B cell (primary cell): ENCODE measurements at regions of chr10 and their contacts with region 1.

Region 1: GRCh38 chr10:23314835-23315239 is 29.8 kb downstream of the C10orf67 start:
- DNase-seq: peak; percentile 79
- ATAC-seq: peak; percentile 56
- H3K4me3 ChIP-seq: no peak overlapping the region
- H3K4me3 Mint-ChIP-seq: no peak overlapping the region
- H3K27ac ChIP-seq: no peak overlapping the region
- H3K27ac Mint-ChIP-seq: no peak overlapping the region
- H3K4me1 ChIP-seq: no peaks in the 10 kb centered on the region
- H3K4me1 Mint-ChIP-seq: no peaks in the 10 kb centered on the region
- H3K27me3 ChIP-seq: peaks cover 0 to 3% (median 0%) of the 10 kb centered on the region in 4 experiments
- H3K27me3 Mint-ChIP-seq: peaks cover 10% of the 10 kb centered on the region
- CTCF ChIP-seq: peak; percentile 92

Region 2: DNA sequence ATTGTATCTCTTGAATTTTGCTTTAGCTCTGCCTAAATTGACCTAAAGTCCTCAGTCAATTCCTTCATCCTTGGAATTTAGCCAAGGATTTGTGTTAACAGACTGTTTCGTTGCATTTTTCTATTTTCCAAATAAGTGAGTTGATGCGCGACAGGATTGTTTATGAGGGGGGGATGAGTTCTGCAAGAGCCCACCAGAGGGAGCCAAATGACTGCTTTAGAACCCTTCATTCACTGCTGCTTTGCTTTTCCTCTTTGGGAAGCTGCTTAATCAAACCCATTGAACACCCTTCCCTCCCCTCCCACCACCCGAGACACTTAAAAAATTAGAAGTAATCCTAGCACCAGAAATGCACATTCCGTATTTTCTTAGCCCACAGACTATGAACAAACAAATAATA is 156.5 kb before region 1 on chr10:
- CTCF ChIA-PET with region 1: interaction called, 7 read pairs
- POLR2A ChIA-PET with region 1: no interaction called
- intact Hi-C with region 1: loop called (anchors 1 kb)
- DNase-seq: peak; percentile 59
- ATAC-seq: peak; percentile 61
- H3K4me3 ChIP-seq: no peak overlapping the region
- H3K4me3 Mint-ChIP-seq: no peak overlapping the region
- H3K27ac ChIP-seq: no peak overlapping the region
- H3K27ac Mint-ChIP-seq: no peak overlapping the region
- H3K4me1 ChIP-seq: no peaks in the 10 kb centered on the region
- H3K4me1 Mint-ChIP-seq: peaks cover 8% of the 10 kb centered on the region
- H3K27me3 ChIP-seq: peaks cover 0 to 9% (median 0%) of the 10 kb centered on the region in 4 experiments
- H3K27me3 Mint-ChIP-seq: peaks cover 42% of the 10 kb centered on the region
- CTCF ChIP-seq: peak; percentile 86

Region 3: GRCh38 chr10:23230582-23230981 is 84.3 kb before region 1 on chr10:
- CTCF ChIA-PET with region 1: no interaction called
- POLR2A ChIA-PET with region 1: no interaction called
- intact Hi-C with region 1: no loop called
- DNase-seq: no peak
- ATAC-seq: no peak
- H3K4me3 ChIP-seq: no peak overlapping the region
- H3K4me3 Mint-ChIP-seq: no peak overlapping the region
- H3K27ac ChIP-seq: no peak overlapping the region
- H3K27ac Mint-ChIP-seq: no peak overlapping the region
- H3K4me1 ChIP-seq: no peaks in the 10 kb centered on the region
- H3K4me1 Mint-ChIP-seq: no peaks in the 10 kb centered on the region
- H3K27me3 ChIP-seq: no peaks in the 10 kb centered on the region
- H3K27me3 Mint-ChIP-seq: peaks cover 3% of the 10 kb centered on the region
- CTCF ChIP-seq: no peak

Region 4: DNA sequence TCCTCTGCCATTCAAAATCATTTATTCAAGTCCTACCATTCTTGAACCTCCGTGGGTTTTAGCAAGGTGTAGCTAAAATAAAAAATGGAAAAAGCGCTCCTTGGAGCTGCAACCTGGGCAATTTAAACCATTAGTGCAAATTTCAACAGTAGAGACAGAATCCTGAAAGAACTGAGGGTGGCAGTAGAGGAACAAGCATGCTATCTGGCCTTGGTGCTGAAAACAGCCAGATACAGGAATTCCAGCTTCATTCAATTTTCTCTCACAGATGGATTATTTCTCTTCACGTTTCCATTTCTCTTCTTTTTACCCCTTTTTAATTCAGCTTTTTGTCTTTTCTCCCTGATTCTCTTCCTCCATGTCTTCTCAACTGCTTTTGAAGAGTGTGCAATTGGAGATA is 201.7 kb after region 1 on chr10:
- CTCF ChIA-PET with region 1: interaction called, 450 read pairs
- POLR2A ChIA-PET with region 1: no interaction called
- intact Hi-C with region 1: no loop called
- DNase-seq: no peak
- ATAC-seq: no peak
- H3K4me3 ChIP-seq: no peak overlapping the region
- H3K4me3 Mint-ChIP-seq: no peak overlapping the region
- H3K27ac ChIP-seq: no peak overlapping the region
- H3K27ac Mint-ChIP-seq: no peak overlapping the region
- H3K4me1 ChIP-seq: peaks cover 7% of the 10 kb centered on the region in 2 donors
- H3K4me1 Mint-ChIP-seq: peaks cover 13% of the 10 kb centered on the region
- H3K27me3 ChIP-seq: peaks cover 0 to 18% (median 4%) of the 10 kb centered on the region in 4 experiments
- H3K27me3 Mint-ChIP-seq: peaks cover 15% of the 10 kb centered on the region
- CTCF ChIP-seq: no peak

Region 5: DNA sequence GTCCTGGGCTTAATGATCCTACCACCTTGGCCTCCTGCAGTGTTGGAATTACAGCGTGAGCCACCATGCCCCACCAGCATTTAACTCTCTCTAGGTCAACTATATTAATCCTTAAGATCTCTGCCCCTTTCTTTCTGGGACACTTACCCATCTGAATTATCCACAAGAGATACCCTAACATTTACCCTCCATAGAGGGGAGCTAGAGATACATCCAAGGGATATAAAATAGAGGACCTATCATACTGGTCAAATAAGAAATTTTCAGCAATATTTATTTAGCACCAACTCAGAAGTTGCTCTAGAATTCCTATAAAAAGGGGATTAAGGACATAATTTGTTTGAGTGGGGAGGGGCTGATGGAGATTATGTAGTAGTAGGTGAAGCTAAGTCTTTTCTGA is 220.5 kb after region 1 on chr10:
- CTCF ChIA-PET with region 1: interaction called, 450 read pairs
- POLR2A ChIA-PET with region 1: no interaction called
- intact Hi-C with region 1: loop called (anchors 1 kb)
- DNase-seq: no peak
- ATAC-seq: no peak
- H3K4me3 ChIP-seq: no peak overlapping the region
- H3K4me3 Mint-ChIP-seq: no peak overlapping the region
- H3K27ac ChIP-seq: no peak overlapping the region
- H3K27ac Mint-ChIP-seq: no peak overlapping the region
- H3K4me1 ChIP-seq: peaks cover 5 to 12% of the 10 kb centered on the region in 2 donors
- H3K4me1 Mint-ChIP-seq: peaks cover 11% of the 10 kb centered on the region
- H3K27me3 ChIP-seq: peaks cover 0 to 3% (median 0%) of the 10 kb centered on the region in 4 experiments
- H3K27me3 Mint-ChIP-seq: peaks cover 33% of the 10 kb centered on the region
- CTCF ChIP-seq: no peak

Region 6: DNA sequence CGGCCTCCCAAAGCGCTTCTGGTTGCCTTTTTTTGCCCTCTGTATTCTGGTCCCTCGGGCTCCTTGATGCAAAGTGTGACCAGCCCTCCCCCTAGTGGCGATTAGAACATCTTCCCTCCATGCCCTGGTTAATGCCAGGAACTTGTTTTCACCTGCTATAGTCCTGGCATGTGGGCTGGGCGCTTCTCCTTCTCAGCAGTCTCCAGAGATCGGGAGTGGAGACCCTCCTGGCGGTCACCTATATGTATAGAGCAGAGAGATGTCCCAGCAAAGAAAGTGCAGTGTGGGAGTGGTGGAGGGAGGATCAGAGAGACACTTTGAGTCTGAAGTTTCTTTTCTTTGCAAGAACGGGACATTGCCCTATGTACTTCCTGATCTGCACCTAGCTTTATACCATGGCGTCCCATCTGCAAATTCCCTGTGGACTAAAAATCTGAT is 388.2 kb after region 1 on chr10:
- CTCF ChIA-PET with region 1: interaction called, 31 read pairs
- POLR2A ChIA-PET with region 1: no interaction called
- intact Hi-C with region 1: no loop called
- DNase-seq: peak; percentile 56
- ATAC-seq: peak; percentile 54
- H3K4me3 ChIP-seq: no peak overlapping the region
- H3K4me3 Mint-ChIP-seq: no peak overlapping the region
- H3K27ac ChIP-seq: no peak overlapping the region
- H3K27ac Mint-ChIP-seq: no peak overlapping the region
- H3K4me1 ChIP-seq: no peaks in the 10 kb centered on the region
- H3K4me1 Mint-ChIP-seq: peaks cover 2% of the 10 kb centered on the region
- H3K27me3 ChIP-seq: peaks cover 0 to 9% (median 2%) of the 10 kb centered on the region in 4 experiments
- H3K27me3 Mint-ChIP-seq: peaks cover 43% of the 10 kb centered on the region
- CTCF ChIP-seq: peak; percentile 69